Left colon (tissue), 2 donors: ENCODE measurements at regions of chr3 and their contacts with region 1.

Region 1: GRCh38 chr3:79361748-79362378 is 405.9 kb downstream of the ROBO1 start:
- DNase-seq: no peak
- ATAC-seq: peak; percentile 53

Region 2: GRCh38 chr3:78434801-78435200 is 927.1 kb before region 1 on chr3:
- intact Hi-C with region 1: no loop called
- DNase-seq: no peak
- ATAC-seq: no peak

Region 3: DNA sequence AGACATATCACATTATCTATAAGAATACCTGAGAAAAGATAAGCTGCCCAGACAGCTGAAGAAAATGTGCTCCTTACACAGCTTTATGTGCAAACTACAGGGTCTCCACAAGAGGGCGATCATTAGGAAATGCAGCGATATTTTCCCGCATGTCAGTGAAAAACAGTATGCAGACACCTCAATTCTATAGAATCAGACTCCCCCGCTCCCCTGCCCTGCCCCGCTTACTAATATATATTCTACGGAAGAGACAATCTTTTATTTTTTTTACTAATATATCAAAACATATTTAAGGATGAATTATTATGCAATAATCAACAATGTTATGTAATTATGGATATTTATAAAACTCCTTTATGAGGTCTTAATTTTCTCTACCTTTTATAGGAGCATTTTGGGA is 275.3 kb before region 1 on chr3:
- intact Hi-C with region 1: loop called in 1 of 2 experiments (anchors 5 kb)
- DNase-seq: peak in 1 of 2 donors; percentile 28
- ATAC-seq: peak; percentile 56

Region 4: GRCh38 chr3:79661896-79662295 is 300.0 kb after region 1 on chr3:
- intact Hi-C with region 1: no loop called
- DNase-seq: no peak
- ATAC-seq: no peak